ENCODE measurements at regions of chr16 and their contacts with region 1.

Region 1: GRCh38 chr16:57734925-57735754 is 430 bp upstream of the KATNB1 start:
- DNase-seq: peak; percentile 92 to 99 (median 97)
- ATAC-seq: peak; percentile 90 to 93 (median 90)
- H3K4me3 ChIP-seq: peak overlapping the region; percentile 85 to 94
- H3K4me3 Mint-ChIP-seq: peak overlapping the region; percentile 98 to 99 (median 98)
- H3K27ac ChIP-seq: peak overlapping the region; percentile 61
- H3K27ac Mint-ChIP-seq: peak overlapping the region; percentile 96 to 98
- H3K4me1 ChIP-seq: peaks cover 11 to 23% of the 10 kb centered on the region in 2 experiments
- H3K4me1 Mint-ChIP-seq: peaks cover 21 to 34% (median 28%) of the 10 kb centered on the region in 3 donors
- H3K27me3 ChIP-seq: no peaks in the 10 kb centered on the region
- H3K27me3 Mint-ChIP-seq: no peaks in the 10 kb centered on the region

Region 2: GRCh38 chr16:57300387-57301125 is 434.6 kb before region 1 on chr16:
- CTCF ChIA-PET with region 1: no interaction called
- POLR2A ChIA-PET with region 1: interaction called in 1 of 2 experiments, 13 read pairs
- DNase-seq: peak; percentile 95 to 100 (median 99)
- ATAC-seq: peak; percentile 86 to 97 (median 94)
- H3K4me3 ChIP-seq: peak overlapping the region; percentile 49 to 62
- H3K4me3 Mint-ChIP-seq: no peak overlapping the region
- H3K27ac ChIP-seq: peak overlapping the region; percentile 83
- H3K27ac Mint-ChIP-seq: no peak overlapping the region
- H3K4me1 ChIP-seq: peaks cover 11 to 49% of the 10 kb centered on the region in 2 experiments
- H3K4me1 Mint-ChIP-seq: peaks cover 13 to 25% (median 23%) of the 10 kb centered on the region in 3 donors
- H3K27me3 ChIP-seq: no peaks in the 10 kb centered on the region
- H3K27me3 Mint-ChIP-seq: no peaks in the 10 kb centered on the region

Region 3: GRCh38 chr16:57462209-57462977 is 272.7 kb before region 1 on chr16 and contains the start of gene POLR2C:
- CTCF ChIA-PET with region 1: interaction called in 1 of 2 experiments, 10 read pairs
- POLR2A ChIA-PET with region 1: no interaction called
- DNase-seq: peak; percentile 82 to 96 (median 89)
- ATAC-seq: peak; percentile 95 to 98 (median 96)
- H3K4me3 ChIP-seq: peak within 1 kb of the TSS; percentile 72 to 93
- H3K4me3 Mint-ChIP-seq: peak within 1 kb of the TSS; percentile 90 to 100 (median 100)
- H3K27ac ChIP-seq: peak within 1 kb of the TSS; percentile 22
- H3K27ac Mint-ChIP-seq: peak within 1 kb of the TSS; percentile 100
- H3K4me1 ChIP-seq: peaks cover 6 to 19% of the 10 kb centered on the region in 2 experiments
- H3K4me1 Mint-ChIP-seq: peaks cover 35 to 42% (median 38%) of the 10 kb centered on the region in 3 donors
- H3K27me3 ChIP-seq: no peaks in the 10 kb centered on the region
- H3K27me3 Mint-ChIP-seq: no peaks in the 10 kb centered on the region
- total RNA-seq, gene POLR2C: 63.8 to 93.9 (median 69.0) TPM

Region 4: GRCh38 chr16:57763285-57764005 is 28.3 kb after region 1 on chr16:
- CTCF ChIA-PET with region 1: no interaction called
- POLR2A ChIA-PET with region 1: no interaction called
- DNase-seq: no peak
- ATAC-seq: no peak
- H3K4me3 ChIP-seq: no peak overlapping the region
- H3K4me3 Mint-ChIP-seq: no peak overlapping the region
- H3K27ac ChIP-seq: no peak overlapping the region
- H3K27ac Mint-ChIP-seq: no peak overlapping the region
- H3K4me1 ChIP-seq: peaks cover 0 to 8% of the 10 kb centered on the region in 2 experiments
- H3K4me1 Mint-ChIP-seq: peaks cover 0 to 2% (median 0%) of the 10 kb centered on the region in 3 donors
- H3K27me3 ChIP-seq: peaks cover 0 to 2% of the 10 kb centered on the region in 2 experiments
- H3K27me3 Mint-ChIP-seq: no peaks in the 10 kb centered on the region